ENCODE measurements at regions of chr14 and their contacts with region 1.

Region 1: DNA sequence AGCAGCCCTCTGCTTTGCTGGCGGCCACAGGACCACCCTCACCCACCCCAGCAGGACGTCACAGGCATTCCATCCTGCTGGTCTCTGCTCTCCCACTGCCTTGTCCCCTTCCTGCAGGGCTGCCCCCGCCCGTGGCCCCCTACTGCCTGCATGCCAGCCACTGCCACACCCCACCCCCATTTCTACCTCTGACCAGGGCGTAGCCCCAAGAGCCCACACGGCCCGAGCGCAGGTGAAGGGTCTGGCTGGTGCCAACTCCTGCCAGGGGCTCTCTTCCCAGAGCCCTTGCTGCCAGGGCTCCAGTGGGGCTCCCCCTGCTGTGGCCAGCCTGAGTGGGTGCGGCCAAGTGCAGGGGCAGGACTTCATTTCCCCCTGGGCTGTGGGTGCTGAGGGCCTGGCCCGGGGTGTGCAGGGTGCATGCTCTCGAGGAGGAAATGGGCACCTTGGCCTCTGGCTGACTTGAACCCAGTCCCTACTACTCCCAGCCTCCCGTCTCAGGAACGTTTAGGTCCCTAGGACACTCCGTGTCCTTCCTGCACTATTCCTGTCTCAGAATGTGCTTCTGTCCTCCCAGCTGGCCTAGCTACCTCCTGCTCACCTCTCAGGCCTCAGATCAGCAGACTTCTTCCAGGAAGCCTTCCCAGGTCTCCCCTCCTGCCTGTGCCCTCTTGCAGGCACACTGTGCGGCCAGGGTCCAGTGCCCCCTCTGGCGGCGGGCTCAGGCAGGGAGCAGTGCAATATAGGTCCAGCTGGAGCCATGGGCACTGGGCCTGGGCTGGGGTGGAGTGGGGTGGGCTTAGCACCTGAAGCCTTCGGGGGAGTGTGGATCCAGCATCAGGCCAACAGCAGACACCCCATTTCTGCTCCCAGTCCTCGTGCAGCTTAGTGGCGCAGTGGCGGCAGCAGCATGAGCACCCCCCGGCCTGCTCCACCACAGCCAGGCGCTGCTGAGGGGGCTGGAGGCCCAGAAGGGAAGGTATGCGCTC is 1.4 kb downstream of the LBHD2 start:
- DNase-seq: no peak
- H3K4me3 ChIP-seq: no peak overlapping the region
- H3K27ac ChIP-seq: no peak overlapping the region
- H3K4me1 ChIP-seq: peaks cover 0 to 7% (median 6%) of the 10 kb centered on the region in 4 donors
- H3K27me3 ChIP-seq: peaks cover 26% of the 10 kb centered on the region
- CTCF ChIP-seq: no peak
- EP300 ChIP-seq: no peak
- POLR2A ChIP-seq: no peak

Region 2: DNA sequence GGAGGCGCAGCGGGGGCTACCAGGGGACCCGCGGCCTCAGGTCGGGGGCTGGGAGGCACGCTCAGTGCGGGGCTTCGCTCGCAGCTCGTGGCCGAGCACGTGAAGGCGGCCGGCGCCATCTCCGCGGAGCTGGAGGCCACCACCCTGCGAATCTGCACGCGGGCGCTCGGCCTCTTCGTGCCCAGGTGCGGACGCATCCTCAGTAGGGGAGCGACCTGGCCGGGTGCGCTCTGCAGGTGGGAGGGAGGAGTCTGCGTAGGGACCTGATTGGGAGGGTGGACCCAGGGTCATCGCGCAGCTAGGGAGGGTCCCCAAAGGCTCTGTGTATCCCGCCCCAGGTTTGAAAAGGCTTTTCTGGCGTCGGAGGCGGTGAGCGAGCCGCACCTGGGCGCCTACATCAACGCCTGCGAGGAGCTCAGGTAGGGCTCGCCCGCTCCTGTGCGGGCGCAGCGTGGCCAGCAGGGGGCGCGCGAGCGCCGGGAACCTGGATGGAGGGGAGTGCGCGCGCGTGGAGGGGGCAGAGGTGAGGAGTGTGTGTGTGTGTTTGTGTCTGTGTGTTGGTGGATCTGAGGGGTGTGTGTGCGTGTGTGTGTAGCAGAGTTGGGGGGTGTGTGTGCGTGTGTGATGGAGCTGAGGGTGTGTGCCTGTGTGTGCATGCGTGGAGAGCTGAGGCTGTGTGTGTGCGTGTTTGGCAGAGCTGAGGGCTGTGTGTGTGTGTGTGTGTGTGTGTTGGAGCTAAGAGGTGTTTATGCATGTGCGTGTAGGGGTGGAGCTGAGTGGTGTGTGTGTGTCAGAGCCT is 19.5 kb after region 1 on chr14:
- in situ Hi-C with region 1: no loop called
- intact Hi-C with region 1: loop called (anchors 1 kb)
- DNase-seq: peak; percentile 78
- H3K4me3 ChIP-seq: peak overlapping the region in 2 of 4 donors; percentile 2 to 27
- H3K27ac ChIP-seq: peak overlapping the region in 1 of 4 donors; percentile 41
- H3K4me1 ChIP-seq: peaks cover 12 to 39% (median 26%) of the 10 kb centered on the region in 4 donors
- H3K27me3 ChIP-seq: peaks cover 32% of the 10 kb centered on the region
- CTCF ChIP-seq: peak; percentile 97 to 99 (median 98)
- EP300 ChIP-seq: no peak
- POLR2A ChIP-seq: peak; percentile 31

Region 3: DNA sequence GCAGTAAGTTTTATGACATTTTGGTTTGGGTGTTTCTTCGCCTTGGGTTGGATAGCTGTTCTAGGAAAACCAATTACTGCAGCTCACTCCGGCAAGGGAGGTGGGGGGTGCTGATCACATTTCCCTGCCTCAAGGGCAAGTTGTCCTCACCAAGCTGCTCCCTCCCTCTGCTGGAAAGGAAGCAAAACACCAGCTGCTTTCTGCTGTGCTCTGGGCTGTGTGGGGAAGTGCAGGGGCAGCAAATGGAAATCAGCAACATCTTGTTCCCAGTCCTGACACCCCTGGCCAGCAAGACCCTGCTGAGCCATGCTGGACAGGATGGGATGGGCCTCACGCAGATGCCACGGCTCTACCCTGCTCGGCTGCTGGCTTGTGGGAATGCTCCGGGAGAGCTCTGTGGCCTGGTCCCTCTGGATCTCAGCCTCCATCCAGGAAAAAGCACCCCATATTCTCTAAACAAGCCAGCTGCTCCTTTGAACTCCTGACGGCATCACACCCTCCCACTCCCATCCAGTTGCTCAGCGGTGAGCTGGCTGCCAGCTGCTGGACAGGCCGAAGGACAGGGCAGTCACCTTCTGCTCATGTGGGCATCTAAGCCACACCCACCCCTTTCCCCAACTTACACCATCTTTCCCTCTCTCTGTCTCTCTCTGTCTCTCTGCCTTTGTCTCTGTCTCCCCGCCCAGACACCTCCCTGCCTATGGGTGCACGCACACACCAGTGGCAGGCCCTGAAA is 196.3 kb after region 1 on chr14:
- in situ Hi-C with region 1: loop called in 2 of 4 experiments (anchors 10 to 25 kb)
- intact Hi-C with region 1: no loop called
- DNase-seq: peak; percentile 53
- H3K4me3 ChIP-seq: no peak overlapping the region
- H3K27ac ChIP-seq: peak overlapping the region in 2 of 4 donors; percentile 28 to 40
- H3K4me1 ChIP-seq: peaks cover 0 to 21% (median 10%) of the 10 kb centered on the region in 4 donors
- H3K27me3 ChIP-seq: peaks cover 66% of the 10 kb centered on the region
- CTCF ChIP-seq: peak in 4 of 5 experiments; percentile 23 to 45 (median 30)
- EP300 ChIP-seq: no peak
- POLR2A ChIP-seq: no peak